CD8-positive, alpha-beta T cell (primary cell): ENCODE measurements at regions of chr12 and their contacts with region 1.

Region 1: DNA sequence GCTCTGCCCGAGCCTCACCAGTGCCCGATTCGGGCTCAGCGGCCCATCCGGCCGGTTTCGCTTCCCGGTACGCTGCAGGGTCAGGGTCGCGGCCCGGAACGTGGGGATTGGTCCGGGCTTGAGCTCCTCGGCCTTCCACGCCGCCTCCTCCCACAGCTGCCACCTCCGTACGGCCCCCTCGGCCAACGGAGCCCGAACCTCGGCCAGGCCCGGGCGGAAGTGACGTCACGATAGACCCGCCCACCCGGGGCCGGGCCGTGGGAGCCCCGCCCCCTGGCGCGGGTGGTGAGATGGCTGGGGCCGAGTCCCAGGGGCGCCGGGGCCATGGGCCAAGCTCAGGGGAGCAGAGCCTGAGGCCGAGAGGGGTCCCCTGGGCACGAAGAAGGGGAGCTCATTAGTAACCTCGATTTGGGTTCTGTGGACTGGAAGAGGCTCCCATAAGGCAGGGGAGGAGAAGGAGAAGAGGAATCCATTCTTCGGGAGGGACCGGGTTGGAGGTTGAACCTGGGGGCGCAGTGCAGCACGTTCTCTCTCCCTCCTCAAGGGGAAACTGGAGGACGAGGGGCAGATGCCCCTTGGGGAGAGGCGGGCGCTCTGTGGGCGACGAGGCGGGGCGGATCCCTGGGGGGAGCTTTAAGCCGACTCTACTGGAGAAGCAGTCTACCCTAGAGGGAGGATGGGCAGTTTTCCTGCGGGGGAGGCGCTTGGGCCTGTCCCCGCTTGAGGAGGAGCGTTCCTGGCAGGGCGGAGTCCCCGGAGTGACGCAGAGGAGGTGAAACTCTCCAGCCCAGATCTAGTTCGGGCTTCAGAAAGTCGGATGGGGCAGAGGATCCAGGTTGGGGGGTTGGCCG is at the start of gene MLF2:
- DNase-seq: peak; percentile 93 to 98 (median 97)
- ATAC-seq: peak; percentile 87
- H3K4me3 ChIP-seq: peak within 1 kb of the TSS; percentile 92
- H3K4me3 Mint-ChIP-seq: peak within 1 kb of the TSS; percentile 96
- H3K27ac ChIP-seq: peak within 1 kb of the TSS; percentile 83 to 99
- H3K27ac Mint-ChIP-seq: peak within 1 kb of the TSS; percentile 98
- H3K4me1 ChIP-seq: peaks cover 17% of the 10 kb centered on the region
- H3K4me1 Mint-ChIP-seq: peaks cover 21% of the 10 kb centered on the region
- H3K27me3 ChIP-seq: no peaks in the 10 kb centered on the region
- H3K27me3 Mint-ChIP-seq: peaks cover 2% of the 10 kb centered on the region
- CTCF ChIP-seq: peak; percentile 83
- total RNA-seq, gene MLF2: 106 to 111 TPM

Region 2: DNA sequence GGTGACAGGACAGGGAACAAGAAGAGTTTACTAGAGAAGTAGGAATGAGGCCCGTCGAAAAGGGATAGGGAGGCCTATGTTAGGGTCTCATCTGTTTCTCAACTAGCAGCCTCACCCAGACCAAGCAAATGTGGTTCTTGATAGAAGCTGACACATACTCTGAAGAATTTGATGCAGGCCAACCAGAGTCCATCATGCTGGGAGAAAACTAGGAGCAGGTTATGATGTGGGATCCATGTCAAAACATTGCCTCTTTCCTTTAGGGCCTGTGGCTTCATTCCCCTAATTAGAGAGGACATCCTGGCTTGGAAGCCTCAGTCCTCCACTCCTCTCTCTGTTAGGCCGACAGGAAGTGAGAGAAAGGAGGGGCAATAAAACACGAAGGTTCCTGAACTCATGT is 1198.4 kb before region 1 on chr12:
- CTCF ChIA-PET with region 1: no interaction called
- POLR2A ChIA-PET with region 1: no interaction called
- intact Hi-C with region 1: no loop called
- DNase-seq: no peak
- ATAC-seq: no peak
- H3K4me3 ChIP-seq: no peak overlapping the region
- H3K4me3 Mint-ChIP-seq: no peak overlapping the region
- H3K27ac ChIP-seq: no peak overlapping the region
- H3K27ac Mint-ChIP-seq: no peak overlapping the region
- H3K4me1 ChIP-seq: no peaks in the 10 kb centered on the region
- H3K4me1 Mint-ChIP-seq: no peaks in the 10 kb centered on the region
- H3K27me3 ChIP-seq: no peaks in the 10 kb centered on the region
- H3K27me3 Mint-ChIP-seq: peaks cover 10% of the 10 kb centered on the region
- CTCF ChIP-seq: no peak

Region 3: DNA sequence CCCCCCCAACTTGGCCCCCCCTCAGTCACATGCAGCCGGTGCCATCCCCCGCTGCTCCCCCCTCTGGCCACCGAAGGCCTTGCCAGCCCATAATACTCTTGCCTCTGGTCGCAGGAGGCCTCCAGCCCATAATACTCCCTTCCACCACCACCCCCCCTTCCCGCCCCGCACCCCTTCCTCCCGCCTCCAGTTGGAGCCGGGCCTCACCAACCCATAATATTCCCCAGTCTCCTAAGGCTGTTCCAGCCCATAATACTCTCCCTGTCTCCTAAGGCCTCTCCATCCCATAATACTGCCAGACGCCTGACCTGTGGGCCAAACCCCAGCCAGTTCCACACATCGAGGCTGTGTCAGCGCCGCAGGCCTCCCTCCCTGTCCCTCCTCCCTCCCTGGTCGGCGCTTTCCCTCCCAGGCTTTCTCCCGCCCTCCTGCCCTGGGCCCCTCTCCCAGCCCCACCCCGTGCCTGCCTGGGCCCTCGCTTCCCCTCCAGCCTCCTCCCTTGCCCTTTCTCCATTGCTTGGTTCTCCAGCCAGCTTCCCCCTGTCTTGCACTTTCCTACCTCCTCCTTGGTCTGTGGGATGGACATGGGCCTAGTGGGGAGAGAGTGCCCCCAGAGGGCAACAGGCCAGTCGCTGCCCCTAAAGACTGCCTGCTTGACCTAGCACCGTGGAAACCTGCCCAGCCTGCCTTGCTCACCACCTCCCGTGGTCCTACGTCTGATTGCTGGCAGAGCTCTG is 139.2 kb before region 1 on chr12:
- CTCF ChIA-PET with region 1: interaction called, 7 read pairs
- POLR2A ChIA-PET with region 1: interaction called, 3 read pairs
- intact Hi-C with region 1: loop called (anchors 1 kb)
- DNase-seq: peak in 7 of 9 experiments; percentile 36 to 90 (median 67)
- ATAC-seq: peak; percentile 43
- H3K4me3 ChIP-seq: no peak overlapping the region
- H3K4me3 Mint-ChIP-seq: no peak overlapping the region
- H3K27ac ChIP-seq: peak overlapping the region in 1 of 2 experiments; percentile 77
- H3K27ac Mint-ChIP-seq: peak overlapping the region; percentile 90
- H3K4me1 ChIP-seq: peaks cover 37% of the 10 kb centered on the region
- H3K4me1 Mint-ChIP-seq: peaks cover 55% of the 10 kb centered on the region
- H3K27me3 ChIP-seq: no peaks in the 10 kb centered on the region
- H3K27me3 Mint-ChIP-seq: no peaks in the 10 kb centered on the region
- CTCF ChIP-seq: no peak

Region 4: DNA sequence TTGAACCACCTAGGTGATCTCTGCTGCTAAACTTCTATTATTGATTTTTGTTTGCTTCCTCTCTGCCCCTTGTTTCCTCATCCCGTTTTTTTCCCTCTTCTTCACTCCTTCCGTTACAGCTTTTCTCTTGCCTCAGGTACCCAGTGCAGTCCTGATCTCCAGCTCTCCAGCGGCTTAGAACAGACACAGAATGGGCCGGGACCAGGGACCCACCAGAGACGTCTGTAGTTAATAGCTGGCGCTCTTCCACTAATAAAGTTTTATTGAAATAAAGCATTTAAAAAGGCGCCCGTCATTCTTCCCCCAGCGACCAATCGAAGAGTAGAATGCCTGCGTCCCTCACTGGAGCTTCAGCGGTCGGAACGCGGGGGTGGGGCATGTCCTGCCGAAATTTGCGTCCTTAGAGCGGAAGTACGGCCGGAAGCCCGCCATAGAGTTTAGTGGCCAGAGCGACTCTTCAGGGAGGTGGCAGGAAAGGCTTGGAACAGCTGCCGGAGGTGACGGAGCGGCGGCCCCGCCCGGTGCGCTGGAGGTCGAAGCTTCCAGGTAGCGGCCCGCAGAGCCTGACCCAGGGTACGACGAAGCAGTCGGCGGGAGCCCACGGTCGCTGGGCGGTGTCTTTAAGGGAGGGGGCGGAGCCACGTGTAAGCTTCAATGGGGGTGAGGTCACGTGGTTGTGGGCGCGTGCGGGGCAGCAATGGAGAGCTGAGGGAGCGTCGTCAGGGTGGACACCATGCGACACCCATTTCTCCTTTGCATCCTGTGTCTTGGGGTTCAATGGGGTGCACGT is 29.3 kb before region 1 on chr12 and contains the start of gene COPS7A:
- CTCF ChIA-PET with region 1: interaction called, 21 read pairs
- POLR2A ChIA-PET with region 1: interaction called, 22 read pairs
- intact Hi-C with region 1: loop called (anchors 1 kb)
- DNase-seq: peak; percentile 83 to 98 (median 97)
- ATAC-seq: peak; percentile 85
- H3K4me3 ChIP-seq: peak within 1 kb of the TSS; percentile 59 to 68
- H3K4me3 Mint-ChIP-seq: peak within 1 kb of the TSS; percentile 83
- H3K27ac ChIP-seq: peak within 1 kb of the TSS; percentile 67 to 92
- H3K27ac Mint-ChIP-seq: peak within 1 kb of the TSS; percentile 94
- H3K4me1 ChIP-seq: peaks cover 19% of the 10 kb centered on the region
- H3K4me1 Mint-ChIP-seq: peaks cover 27% of the 10 kb centered on the region
- H3K27me3 ChIP-seq: no peaks in the 10 kb centered on the region
- H3K27me3 Mint-ChIP-seq: no peaks in the 10 kb centered on the region
- CTCF ChIP-seq: peak; percentile 28
- total RNA-seq, gene COPS7A: 11.0 to 11.1 TPM

Region 5: GRCh38 chr12:6771091-6771495 is 17.9 kb after region 1 on chr12:
- CTCF ChIA-PET with region 1: interaction called, 403 read pairs
- POLR2A ChIA-PET with region 1: interaction called, 31 read pairs
- intact Hi-C with region 1: loop called (anchors 1 kb)
- DNase-seq: no peak
- ATAC-seq: no peak
- H3K4me3 ChIP-seq: no peak overlapping the region
- H3K4me3 Mint-ChIP-seq: peak overlapping the region; percentile 49
- H3K27ac ChIP-seq: no peak overlapping the region
- H3K27ac Mint-ChIP-seq: no peak overlapping the region
- H3K4me1 ChIP-seq: peaks cover 43% of the 10 kb centered on the region
- H3K4me1 Mint-ChIP-seq: peaks cover 50% of the 10 kb centered on the region
- H3K27me3 ChIP-seq: peaks cover 0 to 8% of the 10 kb centered on the region in 2 experiments
- H3K27me3 Mint-ChIP-seq: peaks cover 40% of the 10 kb centered on the region
- CTCF ChIP-seq: no peak

Region 6: GRCh38 chr12:6825398-6826124 is 72.4 kb after region 1 on chr12:
- CTCF ChIA-PET with region 1: interaction called, 116 read pairs
- POLR2A ChIA-PET with region 1: interaction called, 24 read pairs
- intact Hi-C with region 1: loop called (anchors 1 kb)
- DNase-seq: peak; percentile 59 to 86 (median 79)
- ATAC-seq: peak; percentile 63
- H3K4me3 ChIP-seq: no peak overlapping the region
- H3K4me3 Mint-ChIP-seq: peak overlapping the region; percentile 5
- H3K27ac ChIP-seq: no peak overlapping the region
- H3K27ac Mint-ChIP-seq: no peak overlapping the region
- H3K4me1 ChIP-seq: peaks cover 13% of the 10 kb centered on the region
- H3K4me1 Mint-ChIP-seq: peaks cover 32% of the 10 kb centered on the region
- H3K27me3 ChIP-seq: peaks cover 10 to 45% of the 10 kb centered on the region in 2 experiments
- H3K27me3 Mint-ChIP-seq: peaks cover 48% of the 10 kb centered on the region
- CTCF ChIP-seq: peak; percentile 71

Region 7: DNA sequence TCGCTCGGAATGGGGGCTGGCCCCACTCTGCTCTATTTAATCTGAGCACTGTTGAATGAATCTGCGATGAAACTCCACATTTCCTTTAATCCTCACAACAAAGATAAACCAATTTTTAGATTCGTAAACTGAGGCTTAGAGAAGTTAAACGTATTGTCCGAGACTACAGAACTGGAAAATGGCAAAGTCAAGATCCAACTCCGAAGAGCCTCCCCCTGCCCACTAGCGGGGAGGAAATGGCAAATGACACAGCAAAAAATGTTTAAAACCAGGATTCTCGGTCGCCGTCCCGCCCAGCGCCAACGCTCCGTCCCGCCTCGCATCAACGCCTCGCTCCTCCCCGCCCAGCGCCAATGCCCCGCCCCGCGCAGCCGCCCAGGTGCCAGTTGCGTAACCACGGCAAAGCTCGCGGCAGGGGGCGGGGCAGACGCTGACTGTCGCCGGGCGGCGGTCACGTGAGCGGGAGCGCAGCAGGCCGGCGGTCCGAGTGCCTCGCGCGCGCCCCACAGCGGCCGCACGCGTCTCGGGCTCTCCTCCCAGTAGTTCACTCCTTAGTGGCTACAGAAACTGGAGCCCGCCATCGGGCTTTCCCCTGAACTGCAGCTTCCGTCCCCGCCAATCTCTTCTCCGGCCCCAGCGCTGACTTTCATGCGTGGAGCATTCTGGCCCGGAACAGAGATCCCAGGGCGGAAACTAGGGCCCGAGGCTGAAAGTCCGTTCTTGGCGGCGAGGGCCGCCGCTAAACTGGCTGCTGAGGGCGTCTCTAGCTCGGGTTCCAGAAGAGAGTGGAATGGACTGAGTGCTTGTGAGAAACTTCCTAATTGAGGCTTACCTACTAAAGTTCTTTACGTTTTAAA is 137.9 kb after region 1 on chr12:
- CTCF ChIA-PET with region 1: no interaction called
- POLR2A ChIA-PET with region 1: no interaction called
- intact Hi-C with region 1: loop called (anchors 1 kb)
- DNase-seq: peak; percentile 97 to 100 (median 99)
- ATAC-seq: peak; percentile 94
- H3K4me3 ChIP-seq: peak overlapping the region; percentile 64 to 70
- H3K4me3 Mint-ChIP-seq: peak overlapping the region; percentile 80
- H3K27ac ChIP-seq: peak overlapping the region; percentile 64 to 97
- H3K27ac Mint-ChIP-seq: peak overlapping the region; percentile 90
- H3K4me1 ChIP-seq: peaks cover 11% of the 10 kb centered on the region
- H3K4me1 Mint-ChIP-seq: peaks cover 16% of the 10 kb centered on the region
- H3K27me3 ChIP-seq: no peaks in the 10 kb centered on the region
- H3K27me3 Mint-ChIP-seq: no peaks in the 10 kb centered on the region
- CTCF ChIP-seq: peak; percentile 86

Region 8: DNA sequence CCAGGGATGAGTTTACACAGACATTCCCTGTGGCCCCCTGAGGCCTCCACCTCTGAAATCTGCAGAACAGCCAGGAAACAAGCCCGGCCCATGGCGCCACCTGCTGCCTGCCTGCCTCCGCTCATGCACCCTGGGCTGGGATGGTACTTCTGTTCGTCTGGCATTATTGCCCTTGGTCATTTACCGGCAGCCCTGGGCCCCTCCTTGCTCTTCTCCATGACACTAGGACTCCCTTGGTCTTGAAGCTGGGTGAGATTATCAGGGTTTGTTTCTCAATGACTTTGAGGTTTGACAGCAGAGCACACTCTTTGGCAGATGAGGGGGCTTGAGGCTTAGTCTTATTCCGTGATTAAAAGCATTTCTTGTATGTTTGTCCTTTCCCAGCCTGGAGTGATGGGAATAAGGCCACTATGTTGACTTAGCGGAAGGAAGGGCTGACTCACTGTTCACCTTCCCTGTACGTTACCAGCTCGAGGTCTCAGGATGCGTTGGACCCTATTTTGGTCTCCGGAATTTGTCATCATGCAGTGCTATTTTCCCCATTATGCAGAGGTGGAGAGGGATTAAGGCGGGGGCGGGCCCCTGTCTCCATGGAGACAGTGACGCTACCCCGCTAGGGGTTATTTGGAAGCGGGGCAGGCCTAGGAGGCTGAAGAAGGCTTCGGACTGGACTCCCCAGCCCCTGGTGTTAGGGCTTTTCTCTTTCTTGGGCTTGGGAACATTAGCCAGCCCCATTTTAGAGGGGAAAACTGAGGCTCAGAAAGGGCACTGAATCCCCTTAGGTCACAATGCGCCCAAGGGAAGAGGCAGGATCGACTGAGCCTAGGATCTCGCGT is 435.6 kb after region 1 on chr12:
- CTCF ChIA-PET with region 1: no interaction called
- POLR2A ChIA-PET with region 1: no interaction called
- intact Hi-C with region 1: loop called in 1 of 2 experiments (anchors 5 kb)
- DNase-seq: peak; percentile 36 to 76 (median 63)
- ATAC-seq: peak; percentile 32
- H3K4me3 ChIP-seq: peak overlapping the region; percentile 85 to 86
- H3K4me3 Mint-ChIP-seq: peak overlapping the region; percentile 95
- H3K27ac ChIP-seq: peak overlapping the region; percentile 66 to 90
- H3K27ac Mint-ChIP-seq: peak overlapping the region; percentile 97
- H3K4me1 ChIP-seq: peaks cover 26% of the 10 kb centered on the region
- H3K4me1 Mint-ChIP-seq: peaks cover 44% of the 10 kb centered on the region
- H3K27me3 ChIP-seq: no peaks in the 10 kb centered on the region
- H3K27me3 Mint-ChIP-seq: no peaks in the 10 kb centered on the region
- CTCF ChIP-seq: peak; percentile 63